PC-9 (cell line): ENCODE measurements at regions of chr2 and their contacts with region 1.

Region 1: GRCh38 chr2:157055660-157056199 is 201.8 kb upstream of the GALNT5 start:
- DNase-seq: peak in 1 of 2 experiments; percentile 38
- H3K4me3 ChIP-seq: no peak overlapping the region
- H3K27ac ChIP-seq: no peak overlapping the region
- H3K4me1 ChIP-seq: no peaks in the 10 kb centered on the region; the same call in 1 of the 2 replicates
- H3K27me3 ChIP-seq: no peaks in the 10 kb centered on the region
- CTCF ChIP-seq: peak; percentile 69

Region 2: GRCh38 chr2:155377266-155377680 is 1678.5 kb before region 1 on chr2:
- CTCF ChIA-PET with region 1: no interaction called
- POLR2A ChIA-PET with region 1: no interaction called
- intact Hi-C with region 1: loop called (anchors 5 kb)
- DNase-seq: no peak
- H3K4me3 ChIP-seq: no peak overlapping the region
- H3K27ac ChIP-seq: no peak overlapping the region
- H3K4me1 ChIP-seq: no peaks in the 10 kb centered on the region
- H3K27me3 ChIP-seq: no peaks in the 10 kb centered on the region
- CTCF ChIP-seq: peak; percentile 62

Region 3: DNA sequence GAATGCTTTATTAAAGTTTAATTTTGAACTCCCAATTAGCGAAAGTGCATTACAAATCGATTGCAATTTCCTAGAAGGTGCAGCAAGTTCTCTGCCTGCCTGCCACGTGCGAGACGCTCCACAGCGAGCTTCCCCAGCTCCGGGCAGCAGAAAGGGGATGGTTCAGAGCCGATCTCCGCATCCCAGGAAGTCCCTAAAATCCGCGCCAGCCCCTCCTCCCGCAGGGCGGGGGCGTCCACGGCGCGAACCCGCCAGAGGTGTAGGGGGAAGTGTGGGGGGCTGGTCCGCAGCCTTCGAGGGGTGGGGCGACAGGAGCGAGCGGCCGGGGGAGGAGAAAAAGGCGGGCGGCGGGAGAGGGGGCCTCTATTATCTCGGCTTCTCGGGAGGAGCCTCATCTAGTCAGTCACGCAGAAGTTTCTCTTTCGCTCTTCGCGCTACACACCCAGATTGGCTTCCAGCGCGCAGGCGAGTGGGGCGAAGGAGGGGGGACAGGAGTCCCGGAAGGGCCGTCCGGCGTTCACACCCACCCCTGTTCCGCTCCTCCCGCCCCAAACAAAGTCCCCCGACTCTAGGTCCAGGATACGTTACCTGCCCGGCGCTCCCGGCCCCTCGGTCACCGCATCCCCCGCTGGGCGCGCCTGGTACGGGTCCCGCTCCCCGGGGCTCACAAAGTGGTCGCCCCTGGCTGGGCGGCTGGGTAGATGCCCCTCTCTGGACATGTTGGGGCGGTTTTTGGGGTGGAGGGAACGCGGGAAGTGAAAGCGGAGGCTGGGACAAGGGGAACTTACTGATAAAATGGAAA is 714.1 kb before region 1 on chr2:
- CTCF ChIA-PET with region 1: no interaction called
- POLR2A ChIA-PET with region 1: no interaction called
- intact Hi-C with region 1: loop called (anchors 5 kb)
- DNase-seq: peak; percentile 66 to 82
- H3K4me3 ChIP-seq: peak overlapping the region; percentile 74
- H3K27ac ChIP-seq: peak overlapping the region; percentile 78
- H3K4me1 ChIP-seq: peaks cover 14% of the 10 kb centered on the region
- H3K27me3 ChIP-seq: no peaks in the 10 kb centered on the region
- CTCF ChIP-seq: no peak

Region 4: DNA sequence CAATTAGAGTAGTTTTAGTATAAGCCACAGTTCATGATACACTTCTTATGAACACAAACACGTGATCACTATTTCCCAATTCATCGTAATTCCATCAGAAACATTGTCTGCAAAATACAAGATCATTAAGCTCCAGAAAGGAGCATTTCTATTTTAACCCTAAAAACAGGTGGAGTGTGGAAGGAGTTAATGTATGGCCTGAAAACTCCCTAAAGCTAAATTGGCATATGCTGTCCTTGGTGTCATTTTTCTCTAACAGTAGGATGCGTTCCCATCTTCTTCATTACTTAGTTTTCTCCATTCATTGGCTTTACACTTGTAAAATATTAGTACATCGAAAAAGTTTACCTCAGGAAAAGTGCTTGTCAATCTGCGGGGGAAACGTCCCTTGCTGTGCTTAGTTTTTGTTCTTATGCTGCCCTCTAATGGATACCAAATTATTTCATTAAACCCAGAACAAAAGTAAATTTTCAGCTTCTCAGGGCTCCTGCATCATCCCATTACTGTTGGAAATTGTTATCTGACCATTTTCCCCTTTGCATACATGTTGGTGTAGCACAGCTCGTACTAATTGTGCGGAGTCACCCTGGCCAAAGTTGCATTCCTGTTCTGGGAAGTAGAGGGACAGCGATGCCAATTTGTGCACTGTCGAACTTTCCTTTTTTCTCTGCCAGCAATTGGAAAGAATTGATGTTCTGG is 466.2 kb before region 1 on chr2:
- CTCF ChIA-PET with region 1: no interaction called
- POLR2A ChIA-PET with region 1: no interaction called
- intact Hi-C with region 1: loop called (anchors 5 kb)
- DNase-seq: no peak
- H3K4me3 ChIP-seq: no peak overlapping the region
- H3K27ac ChIP-seq: no peak overlapping the region
- H3K4me1 ChIP-seq: no peaks in the 10 kb centered on the region
- H3K27me3 ChIP-seq: no peaks in the 10 kb centered on the region
- CTCF ChIP-seq: peak; percentile 65

Region 5: GRCh38 chr2:156841321-156841720 is 214.4 kb before region 1 on chr2:
- CTCF ChIA-PET with region 1: no interaction called
- POLR2A ChIA-PET with region 1: no interaction called
- intact Hi-C with region 1: no loop called
- DNase-seq: no peak
- H3K4me3 ChIP-seq: no peak overlapping the region
- H3K27ac ChIP-seq: no peak overlapping the region
- H3K4me1 ChIP-seq: no peaks in the 10 kb centered on the region
- H3K27me3 ChIP-seq: no peaks in the 10 kb centered on the region
- CTCF ChIP-seq: no peak

Region 6: DNA sequence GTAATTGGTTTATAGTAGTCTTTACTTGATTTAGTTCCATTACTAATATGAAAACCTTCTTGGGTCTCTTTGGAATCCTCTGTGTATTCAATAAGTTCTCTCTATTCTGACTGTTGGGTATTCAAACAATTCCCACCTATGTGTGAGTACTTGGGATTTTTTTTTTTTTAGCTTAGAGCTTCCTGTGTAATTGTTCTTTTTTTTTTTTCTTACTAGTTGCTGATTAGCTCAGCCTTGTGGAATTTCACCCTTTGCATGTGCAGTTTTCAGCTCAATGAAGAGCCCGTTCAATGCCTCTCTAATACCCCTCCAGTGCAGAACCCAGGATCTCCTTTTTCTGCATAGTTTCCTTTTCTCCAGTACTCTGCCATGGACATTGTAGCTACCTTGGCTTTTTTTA is 137.3 kb before region 1 on chr2:
- CTCF ChIA-PET with region 1: no interaction called
- POLR2A ChIA-PET with region 1: interaction called, 18 read pairs
- intact Hi-C with region 1: no loop called
- DNase-seq: no peak
- H3K4me3 ChIP-seq: no peak overlapping the region
- H3K27ac ChIP-seq: no peak overlapping the region
- H3K4me1 ChIP-seq: no peaks in the 10 kb centered on the region
- H3K27me3 ChIP-seq: no peaks in the 10 kb centered on the region
- CTCF ChIP-seq: no peak

Region 7: DNA sequence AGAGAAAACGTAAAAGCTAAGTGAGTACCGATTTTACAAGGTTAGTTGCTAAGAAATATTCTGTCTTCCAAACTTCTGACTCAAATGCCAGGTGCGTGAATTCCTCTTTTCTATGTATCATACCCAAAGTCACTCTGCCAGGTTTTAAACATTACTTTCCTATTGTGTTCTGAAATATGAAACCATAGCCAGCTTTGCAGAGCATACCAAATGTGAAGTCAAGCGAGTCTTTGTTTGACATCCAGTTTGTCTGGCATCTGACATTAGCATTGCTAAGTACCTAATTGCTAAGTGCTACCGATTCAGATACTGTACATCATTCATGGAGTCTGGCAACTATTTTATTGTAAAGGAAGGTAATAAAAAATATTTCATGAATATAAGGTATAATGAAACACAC is 120.1 kb before region 1 on chr2:
- CTCF ChIA-PET with region 1: interaction called, 3 read pairs
- POLR2A ChIA-PET with region 1: interaction called, 8 read pairs
- intact Hi-C with region 1: loop called (anchors 10 kb)
- DNase-seq: peak; percentile 26 to 82
- H3K4me3 ChIP-seq: no peak overlapping the region
- H3K27ac ChIP-seq: no peak overlapping the region
- H3K4me1 ChIP-seq: 0 out of 2 replicates have a peak, but pooled peaks cover 5% of the 10 kb centered on the region
- H3K27me3 ChIP-seq: no peaks in the 10 kb centered on the region
- CTCF ChIP-seq: no peak

Region 8: GRCh38 chr2:156956161-156956560 is 99.6 kb before region 1 on chr2:
- CTCF ChIA-PET with region 1: no interaction called
- POLR2A ChIA-PET with region 1: no interaction called
- intact Hi-C with region 1: no loop called
- DNase-seq: no peak
- H3K4me3 ChIP-seq: no peak overlapping the region
- H3K27ac ChIP-seq: no peak overlapping the region
- H3K4me1 ChIP-seq: no peaks in the 10 kb centered on the region
- H3K27me3 ChIP-seq: no peaks in the 10 kb centered on the region
- CTCF ChIP-seq: no peak